Pancreas (tissue), 10 donors: ENCODE measurements at regions of chr6 and their contacts with region 1.

Region 1: GRCh38 chr6:37018198-37019064 is 13.0 kb downstream of the FGD2 start:
- DNase-seq: peak; percentile 87 to 96 (median 92)
- ATAC-seq: peak; percentile 92 to 96 (median 94)
- H3K4me3 ChIP-seq: no peak overlapping the region
- H3K27ac ChIP-seq: peak overlapping the region in 2 of 4 donors; percentile 34 to 42
- H3K4me1 ChIP-seq: peaks cover 8 to 28% (median 9%) of the 10 kb centered on the region in 3 donors
- H3K27me3 ChIP-seq: no peaks in the 10 kb centered on the region
- CTCF ChIP-seq: peak; percentile 81 to 89 (median 82)

Region 2: DNA sequence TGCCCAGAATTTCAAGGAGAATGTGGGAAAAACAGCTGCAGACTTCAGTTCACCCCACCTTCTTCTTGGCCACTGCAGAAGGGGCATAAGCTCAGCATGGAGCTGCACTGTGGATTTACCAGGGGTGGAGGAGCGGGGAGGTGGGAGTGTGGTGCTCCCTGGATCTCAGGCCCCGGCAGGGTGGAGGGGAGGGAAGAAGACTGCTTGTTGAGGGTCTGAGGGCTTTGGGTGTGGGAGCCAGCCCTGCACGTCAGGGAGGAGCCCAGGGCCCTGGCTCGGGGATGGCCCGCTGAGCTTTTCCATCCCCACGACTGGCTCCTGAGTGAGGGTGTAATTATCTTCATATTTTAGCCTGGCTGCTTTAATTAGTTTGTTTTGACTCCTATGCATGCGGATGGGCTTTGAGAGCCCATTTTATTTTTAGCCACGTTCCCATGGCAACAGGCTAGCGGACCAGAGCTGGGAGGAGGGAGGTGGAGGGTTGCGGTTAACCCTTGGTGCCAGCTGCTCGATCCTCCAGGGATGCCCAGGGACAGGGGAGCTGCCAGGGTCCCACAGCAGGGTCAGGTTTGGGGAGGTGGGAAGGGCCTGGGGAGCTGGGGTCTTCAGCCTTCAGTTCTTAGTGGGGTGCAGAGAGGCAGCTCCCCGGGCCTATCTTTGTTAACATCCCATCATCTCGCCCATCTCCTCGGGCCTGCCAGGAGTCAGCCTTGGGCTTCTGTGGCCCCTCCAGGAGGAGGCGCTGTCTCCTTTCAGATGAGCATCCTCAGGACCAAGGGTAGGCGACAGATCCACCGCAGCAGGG is 252.6 kb before region 1 on chr6:
- intact Hi-C with region 1: loop called in 1 of 3 experiments (anchors 10 kb)
- DNase-seq: peak; percentile 73 to 90 (median 85)
- ATAC-seq: peak; percentile 86 to 95 (median 94)
- H3K4me3 ChIP-seq: no peak overlapping the region
- H3K27ac ChIP-seq: no peak overlapping the region
- H3K4me1 ChIP-seq: peaks cover 0 to 5% (median 0%) of the 10 kb centered on the region in 3 donors
- H3K27me3 ChIP-seq: no peaks in the 10 kb centered on the region
- CTCF ChIP-seq: peak; percentile 77 to 85 (median 80)

Region 3: GRCh38 chr6:36820700-36821580 is 197.5 kb before region 1 on chr6:
- intact Hi-C with region 1: no loop called
- DNase-seq: no peak
- ATAC-seq: peak in 1 of 4 donors; percentile 55
- H3K4me3 ChIP-seq: no peak overlapping the region
- H3K27ac ChIP-seq: no peak overlapping the region
- H3K4me1 ChIP-seq: no peaks in the 10 kb centered on the region
- H3K27me3 ChIP-seq: no peaks in the 10 kb centered on the region
- CTCF ChIP-seq: no peak

Region 4: DNA sequence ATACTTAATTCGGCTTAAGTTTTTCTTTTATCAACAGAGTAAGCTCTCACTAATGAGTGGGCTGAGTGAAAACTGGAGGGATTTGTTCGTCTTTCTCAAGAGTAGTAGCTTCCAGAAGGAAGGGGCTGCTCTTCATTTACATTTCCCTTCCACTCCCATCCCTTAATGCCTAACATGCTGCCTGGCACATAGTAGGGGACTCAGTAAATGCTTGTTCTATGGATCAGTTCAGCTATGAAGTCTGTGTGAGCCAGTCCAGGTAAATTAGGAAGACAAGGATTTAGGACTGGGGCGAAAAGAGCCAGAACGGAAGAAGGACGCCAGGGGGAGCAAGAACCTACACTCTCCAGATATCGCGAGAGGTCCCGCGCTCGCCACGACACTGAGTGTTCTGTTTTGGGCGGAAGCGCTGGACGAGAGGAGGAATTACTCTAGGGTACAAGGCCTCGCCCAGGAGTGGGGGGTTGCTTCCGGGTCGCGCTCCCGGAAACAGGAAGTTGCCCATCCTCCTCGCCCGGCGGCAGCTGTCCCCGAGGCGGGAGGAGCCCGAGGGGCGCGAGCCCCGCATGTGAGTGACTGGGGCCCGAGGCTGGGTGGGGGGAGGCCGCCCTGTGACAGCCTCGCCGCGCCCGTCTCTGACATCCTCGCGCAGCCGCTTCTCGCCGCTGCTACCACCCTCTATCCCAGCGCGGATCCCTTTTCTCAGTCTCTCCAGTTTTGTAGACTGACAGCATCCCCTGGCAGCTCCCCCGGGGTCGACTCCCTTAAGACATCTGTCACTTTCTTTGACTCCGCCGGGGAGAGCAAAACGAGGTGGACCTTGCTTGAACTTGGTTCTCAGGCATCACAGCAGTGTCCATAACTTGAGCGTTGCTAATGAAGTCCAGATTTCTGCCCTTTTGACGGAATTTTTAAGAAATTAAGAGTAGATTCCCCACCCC is 132.7 kb before region 1 on chr6 and contains the start of gene C6orf89:
- intact Hi-C with region 1: loop called in 1 of 3 experiments (anchors 10 kb)
- DNase-seq: peak; percentile 96 to 99 (median 97)
- ATAC-seq: peak; percentile 99 to 100 (median 100)
- H3K4me3 ChIP-seq: peak within 1 kb of the TSS; percentile 59 to 82 (median 76)
- H3K27ac ChIP-seq: peak within 1 kb of the TSS; percentile 60 to 89 (median 76)
- H3K4me1 ChIP-seq: peaks cover 4 to 12% (median 10%) of the 10 kb centered on the region in 3 donors
- H3K27me3 ChIP-seq: no peaks in the 10 kb centered on the region
- CTCF ChIP-seq: peak; percentile 56 to 75 (median 64)
- total RNA-seq, gene C6orf89: 26.0 to 39.2 (median 31.9) TPM

Region 5: GRCh38 chr6:37072526-37072925 is 54.1 kb after region 1 on chr6:
- intact Hi-C with region 1: no loop called
- DNase-seq: no peak
- ATAC-seq: peak in 1 of 4 donors; percentile 7
- H3K4me3 ChIP-seq: no peak overlapping the region
- H3K27ac ChIP-seq: no peak overlapping the region
- H3K4me1 ChIP-seq: no peaks in the 10 kb centered on the region
- H3K27me3 ChIP-seq: no peaks in the 10 kb centered on the region
- CTCF ChIP-seq: no peak

Region 6: DNA sequence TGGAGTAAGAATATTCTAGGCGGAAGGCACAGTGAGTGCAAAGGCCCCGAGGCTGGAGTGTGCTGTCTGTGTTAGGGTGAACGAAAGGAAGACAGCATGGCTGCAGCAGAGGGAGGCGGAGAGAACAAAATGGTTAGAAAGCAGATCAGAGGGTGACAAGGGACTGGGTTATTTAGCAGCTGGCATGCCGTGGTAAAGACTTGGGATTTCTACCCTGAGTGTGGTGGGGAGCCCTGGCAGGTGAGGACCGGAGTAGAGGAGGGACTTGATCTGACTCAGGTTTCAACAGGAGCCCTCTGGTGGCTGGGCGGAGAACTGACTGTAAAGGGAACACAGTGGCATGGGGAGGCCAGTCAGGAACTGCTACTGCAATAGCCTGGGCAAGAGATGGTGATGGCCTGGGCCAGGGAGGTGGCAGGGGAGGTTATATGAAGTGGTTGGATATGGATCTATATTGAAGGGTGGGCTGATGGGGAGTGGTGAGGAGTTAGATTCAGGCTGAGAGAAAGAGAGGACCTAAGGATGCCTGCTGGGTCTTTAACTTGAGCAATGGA is 189.5 kb after region 1 on chr6:
- intact Hi-C with region 1: loop called in 1 of 3 experiments (anchors 5 kb)
- DNase-seq: peak; percentile 67 to 89 (median 84)
- ATAC-seq: peak; percentile 53 to 83 (median 81)
- H3K4me3 ChIP-seq: no peak overlapping the region
- H3K27ac ChIP-seq: no peak overlapping the region
- H3K4me1 ChIP-seq: no peaks in the 10 kb centered on the region
- H3K27me3 ChIP-seq: no peaks in the 10 kb centered on the region
- CTCF ChIP-seq: peak; percentile 25 to 67 (median 52)

Region 7: DNA sequence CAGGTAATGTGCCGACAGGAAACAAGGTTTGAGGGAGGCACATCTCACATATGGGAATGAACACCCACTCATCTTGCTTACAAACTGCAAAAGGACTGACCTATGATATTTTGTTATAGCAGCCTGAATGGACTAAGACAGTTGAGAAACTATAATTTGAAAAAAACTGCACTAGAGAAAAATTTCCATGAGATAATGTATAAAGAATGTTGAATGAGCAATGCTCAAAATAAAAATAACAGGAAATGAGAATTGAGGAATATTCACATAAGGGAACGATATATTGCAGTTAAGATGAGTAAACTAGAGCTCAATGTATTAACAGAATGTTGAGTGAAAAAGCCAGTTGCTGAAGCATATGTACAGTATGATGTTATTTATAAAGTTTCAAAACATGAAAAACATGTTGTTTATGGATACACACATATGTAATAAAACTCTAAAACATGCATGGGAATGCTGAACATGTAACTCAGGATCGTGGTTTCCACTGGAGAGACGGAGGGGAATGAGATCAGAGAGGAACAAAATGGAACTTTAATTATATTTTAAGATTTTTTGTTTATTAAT is 232.9 kb after region 1 on chr6:
- intact Hi-C with region 1: no loop called
- DNase-seq: no peak
- ATAC-seq: no peak
- H3K4me3 ChIP-seq: no peak overlapping the region
- H3K27ac ChIP-seq: no peak overlapping the region
- H3K4me1 ChIP-seq: no peaks in the 10 kb centered on the region
- H3K27me3 ChIP-seq: no peaks in the 10 kb centered on the region
- CTCF ChIP-seq: no peak